Heart left ventricle (tissue), 16 donors: ENCODE measurements at regions of chr12 and their contacts with region 1.

Region 1: DNA sequence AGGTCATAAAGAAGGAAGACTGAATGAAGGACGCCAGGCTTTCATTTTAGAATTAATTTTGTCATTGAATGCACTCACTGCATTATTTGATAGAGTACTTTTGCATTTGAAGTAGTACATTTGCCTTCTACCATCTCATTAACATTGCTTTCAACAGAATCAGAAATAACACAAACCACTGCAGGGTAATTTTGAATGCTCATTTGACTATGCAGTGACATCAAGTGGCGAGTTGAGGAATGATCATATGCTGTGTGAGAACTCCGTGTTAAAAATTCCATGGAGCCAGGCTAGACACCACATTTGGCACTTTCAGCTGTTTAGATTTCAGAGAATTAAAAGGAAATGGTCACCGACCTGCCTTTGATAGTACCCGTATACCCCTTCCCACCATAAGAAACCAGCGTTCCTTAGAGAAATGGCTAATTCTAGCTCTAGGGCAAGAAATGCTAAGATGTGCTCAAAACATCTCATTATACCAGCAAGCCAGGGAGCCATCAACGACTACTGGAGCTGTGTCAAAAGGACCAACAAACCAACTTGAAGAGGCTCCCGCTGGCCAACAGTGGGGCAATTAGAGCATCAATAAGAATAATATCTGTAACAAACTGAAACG is 16.5 kb downstream of the HEBP1 start:
- DNase-seq: peak in 1 of 5 donors; percentile 27
- ATAC-seq: peak in 3 of 4 donors; percentile 73 to 75 (median 74)
- H3K4me3 ChIP-seq: no peak overlapping the region
- H3K27ac ChIP-seq: no peak overlapping the region
- H3K4me1 ChIP-seq: peaks cover 0 to 15% (median 5%) of the 10 kb centered on the region in 12 donors
- H3K27me3 ChIP-seq: no peaks in the 10 kb centered on the region
- CTCF ChIP-seq: peak; percentile 38 to 76 (median 54)
- POLR2A ChIP-seq: no peak

Region 2: DNA sequence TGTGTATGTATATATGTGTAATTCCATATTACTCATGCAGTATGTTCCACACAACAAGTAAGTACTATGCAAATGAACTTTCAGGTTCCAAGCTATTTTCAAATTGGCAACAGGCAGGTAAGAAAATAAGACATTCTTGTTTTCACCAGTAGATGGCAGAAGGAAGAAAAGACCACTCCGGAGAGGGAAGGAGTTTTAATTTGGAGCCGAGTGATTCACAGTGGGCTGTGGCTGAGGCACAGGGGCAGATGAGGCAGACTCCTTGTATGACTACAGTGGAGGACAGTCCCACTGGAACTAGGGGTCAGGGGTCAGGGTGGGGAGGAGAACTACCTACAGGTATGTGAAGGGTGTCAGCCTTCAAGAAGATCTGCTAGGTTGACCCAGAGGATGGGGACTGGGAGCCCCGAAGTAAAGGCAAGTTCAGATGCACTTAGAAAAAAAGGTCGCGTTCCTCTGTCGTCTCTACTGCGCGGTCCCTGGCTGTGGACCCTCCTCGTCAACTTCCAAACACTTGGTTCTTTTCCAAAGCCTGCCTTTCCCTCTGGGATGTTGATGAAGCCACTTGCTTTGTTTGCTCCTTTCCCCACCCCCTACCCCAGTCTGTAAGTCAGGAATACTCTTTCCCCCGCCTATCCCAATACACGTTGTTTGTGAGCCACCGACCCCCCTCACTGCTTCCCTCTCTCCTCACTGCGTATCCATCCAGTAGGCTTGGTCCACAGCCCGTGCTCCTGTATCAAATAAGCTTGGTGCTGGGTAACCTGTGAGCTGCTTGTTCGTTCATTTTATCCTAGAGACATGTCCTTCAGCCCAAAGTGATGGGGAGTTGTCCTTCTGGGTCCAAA is 146.3 kb before region 1 on chr12:
- intact Hi-C with region 1: loop called in 6 of 10 experiments (anchors 5 to 10 kb)
- DNase-seq: peak in 1 of 5 donors; percentile 38
- ATAC-seq: peak in 3 of 4 donors; percentile 50 to 83 (median 69)
- H3K4me3 ChIP-seq: no peak overlapping the region
- H3K27ac ChIP-seq: no peak overlapping the region
- H3K4me1 ChIP-seq: peaks cover 0 to 4% (median 0%) of the 10 kb centered on the region in 12 donors
- H3K27me3 ChIP-seq: no peaks in the 10 kb centered on the region
- CTCF ChIP-seq: peak in 11 of 12 donors; percentile 28 to 62 (median 45)
- POLR2A ChIP-seq: no peak

Region 3: DNA sequence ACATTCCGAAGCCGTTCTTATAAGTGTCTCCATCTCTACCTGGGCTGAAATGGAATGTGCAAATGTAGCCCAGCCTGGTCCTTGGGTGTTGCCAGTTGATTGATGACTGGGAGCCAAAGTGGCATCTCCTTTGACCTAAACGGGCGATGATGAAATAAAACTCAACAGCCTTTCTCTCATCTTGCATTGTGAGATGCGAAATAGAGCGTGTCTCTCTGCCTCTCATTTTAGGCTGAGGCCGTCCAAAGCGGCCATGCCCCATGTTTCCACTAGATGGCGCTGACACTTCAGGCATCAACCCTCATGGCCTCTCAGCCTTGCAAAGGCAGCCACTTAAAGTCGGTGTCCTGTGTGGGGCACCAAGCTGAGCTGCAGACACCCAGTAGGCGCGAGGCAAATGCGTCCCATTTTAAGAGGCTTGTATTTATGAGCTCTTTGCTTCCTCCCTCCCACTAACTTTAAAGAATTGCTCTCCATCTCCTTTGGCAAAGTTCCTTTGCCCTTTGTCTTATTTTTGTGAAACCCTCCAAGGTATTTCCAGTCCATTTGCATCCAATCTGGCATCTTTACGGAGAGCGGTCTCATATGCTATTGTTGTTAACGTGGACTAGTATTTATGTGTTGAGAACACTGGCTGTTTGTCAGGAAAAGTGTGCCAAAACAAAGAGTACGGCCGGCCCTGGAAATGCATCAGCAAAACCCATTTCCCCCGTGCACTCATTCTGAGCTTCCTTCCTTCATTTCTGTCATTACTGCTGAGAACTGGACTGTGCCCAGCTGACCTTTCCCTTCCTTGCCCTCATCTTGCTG is 67.2 kb before region 1 on chr12:
- intact Hi-C with region 1: loop called (anchors 2 to 5 kb)
- DNase-seq: peak; percentile 75 to 88 (median 84)
- ATAC-seq: peak; percentile 86 to 98 (median 96)
- H3K4me3 ChIP-seq: peak overlapping the region in 4 of 12 donors; percentile 10 to 23 (median 16)
- H3K27ac ChIP-seq: peak overlapping the region in 6 of 12 donors; percentile 5 to 46 (median 34)
- H3K4me1 ChIP-seq: peaks cover 0 to 14% (median 7%) of the 10 kb centered on the region in 12 donors
- H3K27me3 ChIP-seq: no peaks in the 10 kb centered on the region
- CTCF ChIP-seq: peak; percentile 96 to 99 (median 98)
- POLR2A ChIP-seq: no peak

Region 4: DNA sequence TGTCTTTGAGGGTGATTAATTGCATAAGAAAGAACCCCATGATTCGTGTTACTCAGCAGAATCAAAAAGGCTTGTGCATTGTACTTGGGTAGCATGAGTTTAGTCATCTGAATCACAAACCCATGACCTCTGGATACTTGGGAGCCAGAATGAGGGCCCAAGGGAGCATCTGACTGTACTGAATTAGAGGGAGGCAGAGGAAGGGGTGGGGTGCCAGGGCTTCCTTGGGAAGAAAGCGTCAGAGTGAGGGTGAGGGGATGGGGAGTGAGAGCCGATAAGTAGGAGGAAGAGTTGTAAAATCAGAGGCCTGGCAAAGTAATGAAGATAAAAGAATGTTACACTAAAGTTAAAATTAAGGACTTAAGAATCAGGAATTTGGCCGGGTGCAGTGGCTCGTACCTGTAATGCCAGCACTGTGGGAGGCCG is 61.3 kb before region 1 on chr12:
- intact Hi-C with region 1: loop called (anchors 2 to 5 kb)
- DNase-seq: peak in 1 of 5 donors; percentile 58
- ATAC-seq: peak in 3 of 4 donors; percentile 70 to 92 (median 78)
- H3K4me3 ChIP-seq: no peak overlapping the region
- H3K27ac ChIP-seq: no peak overlapping the region
- H3K4me1 ChIP-seq: peaks cover 0 to 4% (median 0%) of the 10 kb centered on the region in 12 donors
- H3K27me3 ChIP-seq: no peaks in the 10 kb centered on the region
- CTCF ChIP-seq: no peak
- POLR2A ChIP-seq: no peak

Region 5: DNA sequence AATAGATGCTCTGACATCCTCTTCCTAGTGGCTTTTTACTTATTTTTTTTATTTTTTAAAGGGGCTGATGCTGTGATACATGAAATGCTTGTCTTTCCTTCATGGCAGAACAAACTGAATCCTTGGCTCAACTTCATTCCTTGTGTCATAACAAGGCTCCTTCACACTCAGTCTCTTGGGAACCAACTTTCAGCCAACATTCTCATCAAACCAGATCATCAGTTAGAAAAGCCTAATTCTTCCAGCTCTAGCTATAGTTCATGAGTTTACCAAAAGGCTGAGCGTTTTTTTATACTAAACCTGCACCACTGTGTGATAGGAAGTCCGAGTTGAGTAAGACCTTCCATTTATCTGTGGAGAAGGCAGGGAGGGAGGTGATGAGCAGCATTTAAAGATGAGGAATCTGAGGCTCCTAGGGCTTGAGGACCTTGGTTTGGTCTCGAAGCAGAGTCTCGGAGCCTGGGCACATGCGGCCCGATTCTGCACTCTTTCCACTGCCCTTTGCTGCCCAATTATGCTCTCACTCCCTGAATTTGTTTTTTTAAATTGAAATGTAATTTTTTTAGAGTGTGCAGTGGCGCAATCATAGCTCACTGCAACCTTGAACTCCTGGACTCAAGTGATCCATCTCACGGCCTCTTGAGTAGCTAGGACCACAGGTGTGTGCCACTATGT is 39.8 kb before region 1 on chr12:
- intact Hi-C with region 1: no loop called
- DNase-seq: no peak
- ATAC-seq: no peak
- H3K4me3 ChIP-seq: no peak overlapping the region
- H3K27ac ChIP-seq: no peak overlapping the region
- H3K4me1 ChIP-seq: no peaks in the 10 kb centered on the region
- H3K27me3 ChIP-seq: no peaks in the 10 kb centered on the region
- CTCF ChIP-seq: no peak
- POLR2A ChIP-seq: no peak